MCF 10A (cell line): ENCODE measurements at regions of chr18 and their contacts with region 1.

Region 1: GRCh38 chr18:59459369-59460079 is 100.5 kb upstream of the LMAN1 start:
- DNase-seq: peak; percentile 51
- H3K4me3 Mint-ChIP-seq: no peak overlapping the region
- H3K27ac Mint-ChIP-seq: no peak overlapping the region
- H3K4me1 Mint-ChIP-seq: peaks cover 5% of the 10 kb centered on the region
- H3K27me3 Mint-ChIP-seq: no peaks in the 10 kb centered on the region
- CTCF ChIP-seq: peak; percentile 54

Region 2: GRCh38 chr18:59249205-59249774 is 210.2 kb before region 1 on chr18:
- CTCF ChIA-PET with region 1: no interaction called
- POLR2A ChIA-PET with region 1: no interaction called
- intact Hi-C with region 1: no loop called
- DNase-seq: peak; percentile 60
- H3K4me3 Mint-ChIP-seq: no peak overlapping the region
- H3K27ac Mint-ChIP-seq: no peak overlapping the region
- H3K4me1 Mint-ChIP-seq: no peaks in the 10 kb centered on the region
- H3K27me3 Mint-ChIP-seq: peaks cover 76% of the 10 kb centered on the region
- CTCF ChIP-seq: peak; percentile 93

Region 3: GRCh38 chr18:59446012-59446411 is 13.5 kb before region 1 on chr18:
- CTCF ChIA-PET with region 1: interaction called, 26 read pairs
- POLR2A ChIA-PET with region 1: interaction called, 3 read pairs
- intact Hi-C with region 1: no loop called
- DNase-seq: peak; percentile 39
- H3K4me3 Mint-ChIP-seq: no peak overlapping the region
- H3K27ac Mint-ChIP-seq: no peak overlapping the region
- H3K4me1 Mint-ChIP-seq: no peaks in the 10 kb centered on the region
- H3K27me3 Mint-ChIP-seq: no peaks in the 10 kb centered on the region
- CTCF ChIP-seq: no peak

Region 4: GRCh38 chr18:59484837-59485328 is 25.4 kb after region 1 on chr18:
- CTCF ChIA-PET with region 1: interaction called, 10 read pairs
- POLR2A ChIA-PET with region 1: interaction called, 6 read pairs
- intact Hi-C with region 1: no loop called
- DNase-seq: peak; percentile 85
- H3K4me3 Mint-ChIP-seq: peak overlapping the region; percentile 6
- H3K27ac Mint-ChIP-seq: peak overlapping the region; percentile 51
- H3K4me1 Mint-ChIP-seq: peaks cover 10% of the 10 kb centered on the region
- H3K27me3 Mint-ChIP-seq: no peaks in the 10 kb centered on the region
- CTCF ChIP-seq: no peak

Region 5: GRCh38 chr18:59547581-59548182 is 88.2 kb after region 1 on chr18:
- CTCF ChIA-PET with region 1: interaction called, 10 read pairs
- POLR2A ChIA-PET with region 1: no interaction called
- intact Hi-C with region 1: no loop called
- DNase-seq: peak; percentile 51
- H3K4me3 Mint-ChIP-seq: peak overlapping the region; percentile 48
- H3K27ac Mint-ChIP-seq: no peak overlapping the region
- H3K4me1 Mint-ChIP-seq: peaks cover 9% of the 10 kb centered on the region
- H3K27me3 Mint-ChIP-seq: no peaks in the 10 kb centered on the region
- CTCF ChIP-seq: no peak

Region 6: DNA sequence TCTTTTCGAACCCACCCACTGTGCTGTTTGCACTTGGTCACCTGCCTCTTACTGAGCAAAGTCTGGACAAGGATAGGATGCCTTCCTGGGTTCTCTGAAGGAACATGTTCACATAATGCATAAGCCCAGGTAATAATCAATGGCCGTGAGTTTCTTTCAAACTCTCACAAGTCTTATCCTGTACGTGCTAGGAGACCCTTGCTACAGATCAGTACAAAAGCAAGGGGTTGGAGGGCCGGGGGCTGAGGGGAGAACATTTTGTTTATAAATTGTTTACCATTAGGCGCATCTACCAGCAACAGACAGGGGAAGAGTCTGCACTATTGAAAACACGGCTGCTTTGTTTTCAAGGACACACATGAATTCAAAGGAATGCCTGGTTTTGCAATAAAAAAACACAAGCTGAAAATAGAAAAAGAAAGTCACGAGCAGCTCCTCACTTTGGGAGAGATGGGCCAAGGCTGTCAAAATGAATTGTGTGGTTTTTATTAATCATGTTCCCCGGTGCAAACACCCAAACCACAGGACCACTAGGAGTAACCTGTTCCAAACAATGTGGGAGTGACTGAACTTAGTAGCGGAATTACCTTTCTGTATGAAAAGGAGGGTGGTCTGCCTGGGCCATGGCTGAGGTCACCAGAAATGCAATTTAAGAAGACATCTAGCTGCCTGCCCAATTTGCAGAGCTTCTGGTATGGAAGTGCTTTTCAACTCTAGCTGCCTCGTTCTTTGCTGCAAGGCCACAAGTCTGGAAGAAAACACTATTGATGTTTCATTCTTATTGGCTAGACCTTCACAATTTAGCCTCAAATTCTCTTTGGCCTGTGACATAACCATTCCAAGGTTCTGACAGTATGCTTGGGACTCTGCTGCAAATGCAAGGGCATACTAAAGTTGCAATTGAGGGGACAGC is 164.2 kb after region 1 on chr18:
- CTCF ChIA-PET with region 1: interaction called, 30 read pairs
- POLR2A ChIA-PET with region 1: interaction called, 11 read pairs
- intact Hi-C with region 1: no loop called
- DNase-seq: peak; percentile 86
- H3K4me3 Mint-ChIP-seq: peak overlapping the region; percentile 61
- H3K27ac Mint-ChIP-seq: peak overlapping the region; percentile 67
- H3K4me1 Mint-ChIP-seq: peaks cover 43% of the 10 kb centered on the region
- H3K27me3 Mint-ChIP-seq: peaks cover 4% of the 10 kb centered on the region
- CTCF ChIP-seq: no peak

Region 7: DNA sequence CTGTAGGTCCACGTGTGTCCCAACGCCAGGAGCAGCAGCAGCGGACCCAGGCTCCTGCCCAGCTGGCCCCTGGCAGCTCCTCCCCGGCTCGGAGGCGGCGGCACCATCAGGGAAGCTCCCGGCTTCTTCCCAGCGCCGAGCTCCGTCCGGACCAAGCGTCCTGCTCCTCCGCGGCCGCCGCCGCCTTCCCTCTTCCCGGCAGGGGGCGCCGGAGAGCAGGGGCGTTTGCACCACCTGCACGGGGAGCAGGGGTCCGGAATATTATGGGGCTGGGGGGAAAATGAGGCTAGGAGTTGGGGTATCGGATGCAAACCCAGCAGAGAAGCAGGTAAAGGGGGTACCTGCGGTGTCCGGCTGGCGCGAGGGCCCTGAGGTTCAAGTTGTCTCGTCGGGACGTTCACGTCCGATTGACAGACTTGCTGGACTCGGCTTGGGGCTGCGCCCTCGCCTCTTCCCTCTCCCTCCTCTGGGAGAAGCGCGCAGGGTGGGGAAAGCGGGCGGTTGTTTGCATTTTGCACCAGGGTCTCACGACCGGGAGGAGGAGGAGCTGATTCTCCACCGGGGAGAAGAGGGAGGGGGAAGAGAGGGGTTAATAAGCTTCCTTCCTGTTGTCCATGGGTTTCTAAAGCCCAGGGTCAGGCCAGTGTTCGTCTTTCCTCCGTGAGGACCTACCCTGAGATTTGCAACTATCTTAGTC is 237.9 kb after region 1 on chr18 and contains the start of gene CCBE1:
- CTCF ChIA-PET with region 1: interaction called, 27 read pairs
- POLR2A ChIA-PET with region 1: interaction called, 8 read pairs
- intact Hi-C with region 1: loop called (anchors 1 kb)
- DNase-seq: peak; percentile 85
- H3K4me3 Mint-ChIP-seq: peak within 1 kb of the TSS; percentile 73
- H3K27ac Mint-ChIP-seq: peak within 1 kb of the TSS; percentile 69
- H3K4me1 Mint-ChIP-seq: peaks cover 36% of the 10 kb centered on the region
- H3K27me3 Mint-ChIP-seq: no peaks in the 10 kb centered on the region
- CTCF ChIP-seq: peak; percentile 99
- total RNA-seq, gene CCBE1: 23.8 and 28.9 TPM in 2 replicates

Region 8: DNA sequence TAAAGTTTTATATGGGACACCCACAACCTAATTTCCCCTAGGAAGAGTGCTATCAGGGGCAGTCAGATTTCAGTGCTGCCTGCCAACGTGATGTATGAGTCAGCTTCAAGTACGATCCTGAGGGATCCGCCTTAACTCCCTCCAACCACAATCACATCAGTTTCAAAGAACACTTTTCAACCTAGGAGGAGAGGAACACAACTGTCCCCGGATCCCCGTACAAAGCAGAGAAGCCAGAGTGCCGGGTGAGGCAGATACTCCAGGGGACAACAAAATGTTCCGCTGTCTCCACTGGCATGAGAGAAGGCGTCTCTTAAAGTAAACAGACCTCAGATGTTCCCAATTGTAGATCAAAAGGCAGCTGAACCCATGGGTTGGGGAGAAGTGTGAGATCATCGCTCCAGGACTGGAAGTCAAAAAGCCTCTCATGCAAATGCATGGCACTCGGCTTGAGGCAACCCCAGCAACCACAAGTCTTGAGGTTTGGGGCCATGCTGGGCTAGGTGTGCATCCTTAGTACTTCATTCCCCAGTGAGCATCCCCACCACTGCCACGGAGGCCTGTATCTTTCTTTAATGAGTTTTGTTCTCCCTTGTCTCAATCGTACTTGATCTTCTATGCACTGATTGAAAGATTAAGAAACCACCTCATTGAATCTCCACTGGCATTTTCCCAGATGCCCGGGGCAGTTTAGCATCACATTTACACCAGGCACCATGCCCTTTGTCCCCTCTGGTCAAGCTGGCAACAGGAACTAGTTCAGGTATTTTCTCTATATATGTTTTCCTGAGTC is 328.7 kb after region 1 on chr18:
- CTCF ChIA-PET with region 1: interaction called, 26 read pairs
- POLR2A ChIA-PET with region 1: interaction called, 3 read pairs
- intact Hi-C with region 1: loop called (anchors 1 kb)
- DNase-seq: peak; percentile 74
- H3K4me3 Mint-ChIP-seq: peak overlapping the region; percentile 54
- H3K27ac Mint-ChIP-seq: peak overlapping the region; percentile 76
- H3K4me1 Mint-ChIP-seq: peaks cover 28% of the 10 kb centered on the region
- H3K27me3 Mint-ChIP-seq: no peaks in the 10 kb centered on the region
- CTCF ChIP-seq: no peak